ENCODE measurements at regions of chr20 and their contacts with region 1.

Region 1: DNA sequence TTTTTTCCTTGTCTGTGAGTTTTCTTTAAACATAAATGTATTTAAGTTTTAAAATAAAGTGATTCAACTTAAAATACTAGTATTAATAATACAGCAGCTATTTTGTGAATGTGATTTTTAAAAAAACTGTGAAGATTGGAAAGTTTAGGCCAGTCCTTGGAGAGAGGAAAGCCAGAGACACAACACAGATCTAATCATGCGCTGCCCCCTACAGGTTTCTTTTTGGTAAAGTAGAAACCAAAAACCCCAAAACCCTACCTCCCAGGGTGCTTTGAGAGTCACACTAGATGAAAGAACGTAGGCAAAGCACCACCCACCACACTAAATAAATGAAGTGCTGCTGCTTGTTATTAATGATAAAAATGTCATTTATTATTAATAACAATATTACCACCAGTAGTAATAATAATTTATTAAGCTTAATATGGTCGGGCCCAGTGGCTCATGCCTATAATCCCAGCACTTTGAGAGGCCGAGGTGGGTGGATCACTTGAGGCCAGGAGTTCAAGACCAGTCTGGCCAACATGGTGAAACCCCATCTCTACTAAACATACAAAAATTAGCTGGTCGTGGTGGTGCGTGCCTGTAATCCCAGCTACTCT is 33.7 kb downstream of the SLC9A8 start:
- DNase-seq: peak; percentile 72
- ATAC-seq: peak; percentile 78
- H3K4me3 Mint-ChIP-seq: no peak overlapping the region
- H3K27ac Mint-ChIP-seq: no peak overlapping the region
- H3K4me1 Mint-ChIP-seq: no peaks in the 10 kb centered on the region
- H3K27me3 Mint-ChIP-seq: no peaks in the 10 kb centered on the region
- CTCF ChIP-seq: peak; percentile 76

Region 2: DNA sequence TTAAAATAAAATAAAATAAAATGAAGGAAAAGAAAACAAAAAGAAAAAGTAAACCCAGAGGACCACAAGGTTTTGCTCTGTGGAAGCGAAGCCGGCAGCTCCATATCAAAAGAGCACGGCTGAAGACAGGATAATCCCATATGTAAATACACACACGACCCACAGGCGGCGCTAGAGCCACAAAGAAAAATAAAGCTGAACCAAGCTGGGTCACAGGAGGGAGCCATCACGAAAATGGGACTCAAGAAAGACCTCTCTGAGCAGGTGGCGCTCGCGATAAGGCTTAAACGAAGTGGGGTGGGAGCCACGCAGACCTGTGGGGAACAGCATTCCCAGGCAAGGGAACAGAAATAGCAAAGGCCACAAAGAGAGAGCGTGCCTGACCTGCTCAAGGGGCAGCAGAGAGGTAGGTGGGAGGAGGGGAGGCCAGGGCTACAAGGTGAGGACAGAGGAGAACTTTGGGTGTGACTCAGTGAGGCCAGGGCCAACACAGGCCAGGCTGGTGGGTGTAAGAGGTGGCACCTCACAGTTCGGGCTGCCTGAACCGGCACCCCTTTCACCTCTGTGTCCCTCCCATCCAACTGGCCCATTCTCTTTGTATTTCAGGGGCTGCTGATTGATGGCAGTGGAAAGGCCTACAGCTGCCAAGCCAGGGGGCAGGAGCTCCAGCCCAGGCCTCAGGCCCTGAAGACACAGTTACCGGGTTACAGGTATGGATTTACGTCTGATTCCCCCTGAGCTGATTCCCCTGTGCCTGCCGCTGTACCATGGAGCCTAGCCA is 304.4 kb before region 1 on chr20:
- CTCF ChIA-PET with region 1: interaction called, 10 read pairs
- POLR2A ChIA-PET with region 1: no interaction called
- intact Hi-C with region 1: no loop called
- DNase-seq: peak; percentile 85
- ATAC-seq: peak; percentile 88
- H3K4me3 Mint-ChIP-seq: no peak overlapping the region
- H3K27ac Mint-ChIP-seq: peak overlapping the region; percentile 88
- H3K4me1 Mint-ChIP-seq: peaks cover 16% of the 10 kb centered on the region
- H3K27me3 Mint-ChIP-seq: peaks cover 13% of the 10 kb centered on the region
- CTCF ChIP-seq: peak; percentile 97

Region 3: GRCh38 chr20:49668181-49668877 is 178.0 kb before region 1 on chr20:
- CTCF ChIA-PET with region 1: interaction called, 11 read pairs
- POLR2A ChIA-PET with region 1: no interaction called
- intact Hi-C with region 1: no loop called
- DNase-seq: peak; percentile 86
- ATAC-seq: peak; percentile 85
- H3K4me3 Mint-ChIP-seq: peak overlapping the region; percentile 43
- H3K27ac Mint-ChIP-seq: peak overlapping the region; percentile 13
- H3K4me1 Mint-ChIP-seq: peaks cover 49% of the 10 kb centered on the region
- H3K27me3 Mint-ChIP-seq: no peaks in the 10 kb centered on the region
- CTCF ChIP-seq: no peak

Region 4: DNA sequence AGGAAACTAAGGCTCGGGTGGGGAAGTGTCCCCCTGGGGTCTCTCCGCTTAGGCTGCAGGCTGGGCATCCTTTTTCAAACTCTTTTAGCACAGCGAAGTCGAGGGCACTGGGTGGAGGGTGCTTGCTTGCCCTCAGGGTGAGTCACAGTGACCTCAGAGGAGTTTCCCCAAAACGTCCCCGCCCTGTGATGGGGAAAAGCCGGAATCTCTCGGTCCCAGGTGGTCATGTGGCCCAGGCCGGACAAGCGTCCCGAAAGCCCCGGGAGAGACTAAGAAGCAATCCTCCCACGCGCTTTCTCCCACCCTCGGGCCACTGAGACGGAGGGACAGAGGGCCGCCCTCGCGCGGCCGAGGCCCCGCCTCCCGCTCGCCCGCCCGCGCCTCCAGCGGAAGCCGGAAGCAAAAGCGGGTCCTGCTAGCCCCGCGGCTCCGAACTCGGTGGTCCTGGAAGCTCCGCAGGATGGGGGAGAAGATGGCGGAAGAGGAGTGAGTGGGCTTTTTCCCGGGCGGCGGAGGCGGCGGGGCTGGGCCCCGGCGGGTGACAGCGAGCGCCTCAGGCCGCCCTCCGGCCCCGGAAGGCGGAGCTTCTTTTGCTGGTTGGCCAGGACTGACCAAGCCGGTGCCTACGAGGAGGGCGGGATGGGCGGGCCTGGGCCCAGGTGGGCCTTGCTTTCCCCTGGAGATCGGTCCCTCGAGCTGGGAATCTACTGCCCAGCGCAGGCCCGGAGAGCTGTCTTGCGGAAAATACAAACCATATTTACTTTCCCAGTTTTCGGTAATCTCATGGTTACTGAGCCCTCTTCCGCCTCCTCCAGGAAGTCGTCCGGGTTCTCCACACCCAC is 33.6 kb before region 1 on chr20 and contains the start of gene SLC9A8:
- CTCF ChIA-PET with region 1: interaction called, 10 read pairs
- POLR2A ChIA-PET with region 1: no interaction called
- intact Hi-C with region 1: no loop called
- DNase-seq: peak; percentile 94
- ATAC-seq: peak; percentile 92
- H3K4me3 Mint-ChIP-seq: peak within 1 kb of the TSS; percentile 97
- H3K27ac Mint-ChIP-seq: peak within 1 kb of the TSS; percentile 96
- H3K4me1 Mint-ChIP-seq: peaks cover 39% of the 10 kb centered on the region
- H3K27me3 Mint-ChIP-seq: no peaks in the 10 kb centered on the region
- CTCF ChIP-seq: peak; percentile 25
- total RNA-seq, gene SLC9A8: 9.4 to 11.3 TPM

Region 5: DNA sequence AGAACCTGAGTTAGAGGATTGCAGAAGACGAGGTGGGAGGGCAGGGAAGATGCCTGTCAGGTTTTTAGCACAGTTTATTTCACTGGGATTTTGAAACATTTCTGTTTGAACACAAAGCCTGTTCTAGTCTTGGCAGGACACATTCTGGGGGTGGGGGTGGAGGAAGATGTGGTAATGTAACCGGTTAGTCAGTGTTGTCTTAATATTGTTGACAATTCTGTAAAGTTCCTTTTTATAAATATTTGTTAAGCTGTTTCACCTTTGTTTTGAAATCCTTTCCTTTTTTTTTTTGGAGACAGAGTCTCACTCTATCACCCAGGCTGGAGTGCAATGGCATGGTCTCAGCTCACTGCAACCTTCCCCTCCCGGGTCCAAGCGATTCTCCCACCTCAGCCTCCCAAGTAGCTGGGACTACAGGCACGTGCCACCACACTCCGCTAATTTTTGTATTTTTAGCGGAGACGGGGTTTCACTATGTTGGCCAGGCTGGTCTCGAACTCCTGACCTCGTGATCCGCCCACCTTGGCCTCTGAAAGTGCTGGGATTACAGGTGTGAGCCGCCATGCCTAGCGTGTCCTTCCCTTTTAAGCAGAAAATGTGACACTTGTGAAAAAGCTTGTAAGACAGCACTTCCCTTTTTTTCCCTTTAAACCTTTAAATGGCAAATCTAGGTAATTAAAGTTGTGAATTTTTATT is 13.5 kb before region 1 on chr20:
- CTCF ChIA-PET with region 1: interaction called, 10 read pairs
- POLR2A ChIA-PET with region 1: no interaction called
- intact Hi-C with region 1: no loop called
- DNase-seq: no peak
- ATAC-seq: no peak
- H3K4me3 Mint-ChIP-seq: no peak overlapping the region
- H3K27ac Mint-ChIP-seq: no peak overlapping the region
- H3K4me1 Mint-ChIP-seq: no peaks in the 10 kb centered on the region
- H3K27me3 Mint-ChIP-seq: no peaks in the 10 kb centered on the region
- CTCF ChIP-seq: no peak

Measured in activated CD8-positive, alpha-beta T cell treated with anti-CD3 and anti-CD28 coated beads for 36 hours (primary cell).